ENCODE measurements at regions of chr14 and their contacts with region 1.

Region 1: GRCh38 chr14:81164167-81164774 is 56.5 kb downstream of the GTF2A1 start:
- DNase-seq: peak; percentile 57
- CTCF ChIP-seq: peak; percentile 80

Region 2: GRCh38 chr14:80941241-80942182 is 222.8 kb before region 1 on chr14 and contains the start of gene CEP128:
- CTCF ChIA-PET with region 1: interaction called, 12 read pairs
- POLR2A ChIA-PET with region 1: no interaction called
- DNase-seq: peak; percentile 87
- CTCF ChIP-seq: no peak

Region 3: GRCh38 chr14:80987235-80988032 is 176.8 kb before region 1 on chr14:
- CTCF ChIA-PET with region 1: interaction called, 41 read pairs
- POLR2A ChIA-PET with region 1: no interaction called
- DNase-seq: peak; percentile 68
- CTCF ChIP-seq: peak; percentile 94

Region 4: GRCh38 chr14:80996049-80996901 is 168.0 kb before region 1 on chr14:
- CTCF ChIA-PET with region 1: interaction called, 104 read pairs
- POLR2A ChIA-PET with region 1: no interaction called
- DNase-seq: peak; percentile 38
- CTCF ChIP-seq: peak; percentile 67

Region 5: GRCh38 chr14:81147140-81147897 is 17.0 kb before region 1 on chr14:
- CTCF ChIA-PET with region 1: interaction called, 93 read pairs
- POLR2A ChIA-PET with region 1: no interaction called
- DNase-seq: no peak
- CTCF ChIP-seq: no peak

Region 6: GRCh38 chr14:81178063-81178462 is 13.8 kb after region 1 on chr14:
- CTCF ChIA-PET with region 1: interaction called, 110 read pairs
- POLR2A ChIA-PET with region 1: no interaction called
- DNase-seq: no peak
- CTCF ChIP-seq: no peak

Region 7: GRCh38 chr14:81416194-81416952 is 252.1 kb after region 1 on chr14:
- CTCF ChIA-PET with region 1: no interaction called
- POLR2A ChIA-PET with region 1: no interaction called
- DNase-seq: no peak
- CTCF ChIP-seq: no peak

Measured in GM10248 (cell line).